Psoas muscle (tissue), 8 donors: ENCODE measurements at regions of chr7 and their contacts with region 1.

Region 1: GRCh38 chr7:135801045-135801693 is 52.6 kb upstream of the FAM180A start:
- DNase-seq: no peak
- ATAC-seq: peak; percentile 69 to 90 (median 77)
- H3K4me3 ChIP-seq: peak overlapping the region; percentile 3
- H3K27ac ChIP-seq: no peak overlapping the region
- H3K4me1 ChIP-seq: peaks cover 3% of the 10 kb centered on the region
- H3K27me3 ChIP-seq: no peaks in the 10 kb centered on the region
- CTCF ChIP-seq: peak; percentile 92

Region 2: DNA sequence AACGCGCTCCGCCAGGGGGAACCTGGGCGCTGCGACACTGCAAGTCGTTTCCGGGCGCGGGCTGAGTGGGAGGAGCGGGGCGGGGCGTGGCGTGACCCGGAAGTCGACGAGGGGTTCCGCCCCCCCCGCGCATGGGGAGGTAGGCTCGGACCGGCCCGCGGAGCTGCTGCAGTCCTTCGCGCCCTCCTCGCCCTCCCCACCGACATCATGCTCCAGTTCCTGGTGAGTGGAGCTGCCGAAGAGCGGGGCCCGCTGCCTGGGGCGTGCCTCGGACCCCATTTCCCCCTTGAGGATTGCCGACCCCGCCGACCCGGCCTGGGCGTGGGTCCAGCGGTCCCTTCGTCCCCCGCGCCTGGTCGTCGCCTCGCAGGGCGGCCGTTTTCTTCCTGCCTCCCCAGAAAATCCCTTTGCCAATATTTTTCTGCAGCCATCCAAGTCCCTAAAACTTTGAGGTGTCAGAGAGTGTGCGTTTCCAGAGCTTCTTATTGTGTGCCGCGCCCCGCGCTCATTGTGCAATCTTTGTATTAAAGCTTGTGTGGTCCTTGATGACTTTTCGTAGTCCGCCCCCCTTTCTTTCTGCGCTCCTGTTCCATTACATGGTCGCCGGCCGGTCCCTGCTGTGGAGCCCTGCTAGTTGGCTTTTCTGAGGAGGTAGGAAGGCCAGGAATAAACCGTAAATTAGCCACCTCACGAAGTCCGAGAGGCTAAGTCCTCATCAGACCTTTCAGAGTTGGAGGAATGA is 138.6 kb before region 1 on chr7 and contains the start of gene STMP1:
- intact Hi-C with region 1: loop called in 1 of 2 experiments (anchors 5 kb)
- DNase-seq: peak; percentile 97 to 98
- ATAC-seq: peak; percentile 99
- H3K4me3 ChIP-seq: peak within 1 kb of the TSS; percentile 100
- H3K27ac ChIP-seq: peak within 1 kb of the TSS; percentile 98
- H3K4me1 ChIP-seq: peaks cover 36% of the 10 kb centered on the region
- H3K27me3 ChIP-seq: no peaks in the 10 kb centered on the region
- CTCF ChIP-seq: no peak
- total RNA-seq, gene STMP1: 23.9 to 28.0 (median 24.9) TPM

Region 3: DNA sequence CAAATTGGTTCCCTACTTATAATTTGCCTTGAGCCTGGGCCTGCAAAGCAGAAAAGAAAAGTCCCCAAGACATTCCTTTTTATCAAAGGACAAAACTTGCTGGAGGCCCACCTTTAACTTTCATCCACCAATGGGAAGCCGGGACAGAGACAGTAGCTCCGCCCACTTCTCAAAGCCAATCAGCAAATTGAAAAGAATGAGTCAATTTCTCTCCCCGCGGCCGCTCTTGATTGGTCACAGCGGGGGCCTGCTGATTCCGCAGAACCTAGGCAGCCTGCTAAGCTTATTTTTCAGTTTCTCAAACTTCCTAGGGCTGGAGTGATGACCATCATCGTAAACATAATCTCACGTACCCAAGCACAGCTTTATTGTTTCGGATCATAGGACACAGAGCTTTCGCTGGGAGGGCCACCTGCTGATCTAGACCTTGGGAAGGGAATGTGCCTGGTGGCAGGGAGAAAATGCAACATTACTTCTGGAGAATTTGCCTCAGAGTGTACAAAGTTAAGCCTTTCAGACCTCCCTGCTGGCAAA is 73.0 kb before region 1 on chr7 and contains the start of gene SLC13A4:
- intact Hi-C with region 1: no loop called
- DNase-seq: no peak
- ATAC-seq: no peak
- H3K4me3 ChIP-seq: no peak within 1 kb of the TSS
- H3K27ac ChIP-seq: no peak within 1 kb of the TSS
- H3K4me1 ChIP-seq: no peaks in the 10 kb centered on the region
- H3K27me3 ChIP-seq: no peaks in the 10 kb centered on the region
- CTCF ChIP-seq: no peak
- total RNA-seq, gene SLC13A4: not detected

Region 4: DNA sequence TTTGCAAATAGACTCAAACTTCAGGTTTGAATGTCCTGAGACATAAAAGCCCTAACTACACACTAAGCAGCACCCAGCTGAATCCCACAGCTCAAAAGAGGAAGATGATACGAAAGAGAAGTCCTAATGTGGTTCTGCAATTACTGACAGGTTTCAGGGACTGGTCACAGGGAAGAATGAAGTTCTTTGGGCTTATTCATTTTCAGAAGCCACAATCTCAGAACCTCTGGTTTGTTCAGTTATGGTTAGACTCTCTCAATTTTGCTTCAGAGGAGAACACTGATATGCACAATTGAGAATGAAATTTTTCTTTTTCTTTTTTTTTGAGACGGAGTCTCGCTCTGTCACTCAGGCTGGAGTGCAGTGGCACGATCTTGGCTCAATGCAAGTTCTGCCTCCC is 42.0 kb after region 1 on chr7:
- intact Hi-C with region 1: no loop called
- DNase-seq: no peak
- ATAC-seq: no peak
- H3K4me3 ChIP-seq: no peak overlapping the region
- H3K27ac ChIP-seq: no peak overlapping the region
- H3K4me1 ChIP-seq: no peaks in the 10 kb centered on the region
- H3K27me3 ChIP-seq: no peaks in the 10 kb centered on the region
- CTCF ChIP-seq: no peak

Region 5: GRCh38 chr7:136009488-136010079 is 208.4 kb after region 1 on chr7:
- intact Hi-C with region 1: loop called (anchors 1 to 2 kb)
- DNase-seq: no peak
- ATAC-seq: peak in 3 of 4 donors; percentile 36 to 62 (median 45)
- H3K4me3 ChIP-seq: no peak overlapping the region
- H3K27ac ChIP-seq: no peak overlapping the region
- H3K4me1 ChIP-seq: no peaks in the 10 kb centered on the region
- H3K27me3 ChIP-seq: no peaks in the 10 kb centered on the region
- CTCF ChIP-seq: peak; percentile 86